ENCODE measurements at regions of chr16 and their contacts with region 1.

Region 1: DNA sequence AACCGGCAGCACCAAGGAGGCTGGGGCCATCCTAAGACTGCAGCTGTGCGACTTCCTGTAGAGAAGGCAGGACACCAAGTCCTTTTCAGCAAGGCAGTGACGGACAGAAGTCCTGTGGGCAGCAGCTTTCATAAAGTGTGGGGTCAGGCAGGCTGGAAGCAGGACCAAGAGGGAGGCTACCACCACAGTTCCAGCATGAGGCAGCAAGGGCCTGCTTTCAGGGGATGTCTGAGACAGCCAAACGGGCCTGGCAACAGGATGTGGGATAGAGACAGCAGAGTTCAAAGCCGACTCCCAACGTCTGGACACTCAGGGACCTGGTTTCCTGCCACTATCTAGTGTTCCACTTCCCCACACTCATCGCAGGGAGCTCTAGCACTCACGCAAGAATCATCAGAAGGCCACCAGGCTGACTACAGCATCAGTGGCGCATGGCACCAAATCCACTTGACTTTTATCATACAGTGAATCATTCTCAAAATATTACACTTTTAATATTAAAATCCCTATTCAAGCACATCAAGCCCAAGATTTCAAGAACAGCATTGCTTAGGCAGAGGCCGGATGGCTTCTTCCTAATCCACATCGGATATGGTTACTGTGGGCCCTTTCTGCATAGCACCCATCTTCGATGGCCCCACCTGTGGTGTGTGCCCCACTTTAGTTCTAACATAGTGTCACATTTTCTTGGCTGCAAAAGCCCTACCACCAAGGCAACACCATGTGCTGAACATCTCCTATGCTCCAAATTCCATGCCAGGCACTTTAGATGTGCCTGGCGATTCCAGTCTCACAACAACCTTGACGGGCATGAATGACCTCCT is 5.2 kb downstream of the USP7 start:
- DNase-seq: no peak
- H3K4me3 ChIP-seq: no peak overlapping the region
- H3K27ac ChIP-seq: no peak overlapping the region
- H3K4me1 ChIP-seq: peaks cover 24 to 39% (median 34%) of the 10 kb centered on the region in 4 experiments
- H3K27me3 ChIP-seq: no peaks in the 10 kb centered on the region
- CTCF ChIP-seq: no peak
- EP300 ChIP-seq: no peak
- POLR2A ChIP-seq: no peak
- RAD21 ChIP-seq: no peak

Region 2: GRCh38 chr16:8943966-8944759 is 14.4 kb before region 1 on chr16:
- CTCF ChIA-PET with region 1: interaction called, 16 read pairs
- POLR2A ChIA-PET with region 1: interaction called, 6 read pairs
- DNase-seq: no peak
- H3K4me3 ChIP-seq: peak overlapping the region in 1 of 4 experiments; percentile 16; a peak in 1 of 8 replicates
- H3K27ac ChIP-seq: no peak overlapping the region
- H3K4me1 ChIP-seq: peaks cover 6 to 15% (median 10%) of the 10 kb centered on the region in 4 experiments
- H3K27me3 ChIP-seq: no peaks in the 10 kb centered on the region
- CTCF ChIP-seq: no peak
- EP300 ChIP-seq: no peak
- POLR2A ChIP-seq: no peak
- RAD21 ChIP-seq: no peak

Region 3: GRCh38 chr16:9072806-9073341 is 114.3 kb after region 1 on chr16:
- CTCF ChIA-PET with region 1: no interaction called
- POLR2A ChIA-PET with region 1: no interaction called
- DNase-seq: no peak
- H3K4me3 ChIP-seq: no peak overlapping the region
- H3K27ac ChIP-seq: no peak overlapping the region
- H3K4me1 ChIP-seq: peaks cover 0 to 4% (median 0%) of the 10 kb centered on the region in 4 experiments; a peak in 1 of 7 replicates
- H3K27me3 ChIP-seq: no peaks in the 10 kb centered on the region; a peak in 1 of 7 replicates
- CTCF ChIP-seq: no peak
- EP300 ChIP-seq: no peak
- POLR2A ChIP-seq: no peak
- RAD21 ChIP-seq: no peak